Activated CD8-positive, alpha-beta T cell treated with anti-CD3 and anti-CD28 coated beads, Interleukin-2, amount 10 ng/mL, durations not matched to agents 7 days and 5 days (primary cell): ENCODE measurements at regions of chr1 and their contacts with region 1.

Region 1: GRCh38 chr1:12124693-12125421 is 41.9 kb upstream of the TNFRSF1B start:
- DNase-seq: peak; percentile 86
- ATAC-seq: peak; percentile 50
- H3K4me3 Mint-ChIP-seq: no peak overlapping the region
- H3K27ac Mint-ChIP-seq: peak overlapping the region; percentile 35
- H3K4me1 Mint-ChIP-seq: peaks cover 45% of the 10 kb centered on the region
- H3K27me3 Mint-ChIP-seq: peaks cover 15% of the 10 kb centered on the region

Region 2: GRCh38 chr1:11576109-11576875 is 548.6 kb before region 1 on chr1:
- CTCF ChIA-PET with region 1: no interaction called
- POLR2A ChIA-PET with region 1: no interaction called
- DNase-seq: no peak
- ATAC-seq: no peak
- H3K4me3 Mint-ChIP-seq: no peak overlapping the region
- H3K27ac Mint-ChIP-seq: no peak overlapping the region
- H3K4me1 Mint-ChIP-seq: no peaks in the 10 kb centered on the region
- H3K27me3 Mint-ChIP-seq: peaks cover 5% of the 10 kb centered on the region

Region 3: DNA sequence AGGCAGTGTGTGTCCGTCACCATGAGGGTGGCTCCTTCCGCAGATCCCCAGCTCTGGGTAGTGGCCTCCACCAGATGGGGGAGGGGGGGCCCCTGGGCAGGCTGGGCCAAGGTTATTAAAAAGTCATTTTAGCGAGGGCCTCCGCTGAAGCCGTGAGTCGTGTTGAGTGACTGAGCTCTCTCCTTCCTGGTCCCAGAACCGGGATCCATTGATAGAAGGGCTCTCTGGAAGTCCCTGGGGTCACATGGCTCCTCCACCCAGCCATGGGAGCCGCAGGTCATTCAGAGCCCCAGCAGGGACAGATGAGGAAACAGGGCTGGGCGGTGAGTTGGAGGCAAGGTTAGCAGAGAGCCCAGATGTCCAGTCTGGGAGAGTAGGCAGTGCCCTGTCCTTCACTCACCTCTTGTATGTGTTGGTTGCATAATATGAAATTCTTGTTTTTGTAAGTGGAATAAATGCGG is 92.7 kb before region 1 on chr1:
- CTCF ChIA-PET with region 1: no interaction called
- POLR2A ChIA-PET with region 1: no interaction called
- DNase-seq: no peak
- ATAC-seq: no peak
- H3K4me3 Mint-ChIP-seq: no peak overlapping the region
- H3K27ac Mint-ChIP-seq: no peak overlapping the region
- H3K4me1 Mint-ChIP-seq: no peaks in the 10 kb centered on the region
- H3K27me3 Mint-ChIP-seq: no peaks in the 10 kb centered on the region

Region 4: DNA sequence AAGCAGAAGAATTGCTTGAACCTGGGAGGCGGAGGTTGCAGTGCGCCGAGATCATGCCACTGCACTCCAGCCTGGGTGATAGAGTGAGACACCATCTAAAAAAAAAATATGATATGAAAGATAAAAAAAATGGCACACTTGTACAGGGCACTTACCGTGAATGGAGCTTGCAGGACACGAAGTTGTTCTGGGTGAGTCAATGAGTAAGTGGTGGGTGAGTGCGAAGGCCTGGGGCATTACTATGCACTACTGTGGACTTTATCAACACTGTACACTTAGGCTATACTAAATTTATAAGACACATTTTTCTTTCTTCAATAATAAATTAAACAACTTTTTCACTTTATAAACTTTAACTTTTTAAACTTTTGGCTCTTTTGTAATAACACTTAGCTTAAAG is 24.8 kb before region 1 on chr1:
- CTCF ChIA-PET with region 1: interaction called, 19 read pairs
- POLR2A ChIA-PET with region 1: no interaction called
- DNase-seq: no peak
- ATAC-seq: no peak
- H3K4me3 Mint-ChIP-seq: no peak overlapping the region
- H3K27ac Mint-ChIP-seq: no peak overlapping the region
- H3K4me1 Mint-ChIP-seq: peaks cover 8% of the 10 kb centered on the region
- H3K27me3 Mint-ChIP-seq: no peaks in the 10 kb centered on the region

Region 5: GRCh38 chr1:12161662-12162458 is 37.0 kb after region 1 on chr1:
- CTCF ChIA-PET with region 1: interaction called, 40 read pairs
- POLR2A ChIA-PET with region 1: interaction called, 7 read pairs
- DNase-seq: peak; percentile 91
- ATAC-seq: peak; percentile 90
- H3K4me3 Mint-ChIP-seq: peak overlapping the region; percentile 58
- H3K27ac Mint-ChIP-seq: peak overlapping the region; percentile 97
- H3K4me1 Mint-ChIP-seq: peaks cover 90% of the 10 kb centered on the region
- H3K27me3 Mint-ChIP-seq: no peaks in the 10 kb centered on the region

Region 6: DNA sequence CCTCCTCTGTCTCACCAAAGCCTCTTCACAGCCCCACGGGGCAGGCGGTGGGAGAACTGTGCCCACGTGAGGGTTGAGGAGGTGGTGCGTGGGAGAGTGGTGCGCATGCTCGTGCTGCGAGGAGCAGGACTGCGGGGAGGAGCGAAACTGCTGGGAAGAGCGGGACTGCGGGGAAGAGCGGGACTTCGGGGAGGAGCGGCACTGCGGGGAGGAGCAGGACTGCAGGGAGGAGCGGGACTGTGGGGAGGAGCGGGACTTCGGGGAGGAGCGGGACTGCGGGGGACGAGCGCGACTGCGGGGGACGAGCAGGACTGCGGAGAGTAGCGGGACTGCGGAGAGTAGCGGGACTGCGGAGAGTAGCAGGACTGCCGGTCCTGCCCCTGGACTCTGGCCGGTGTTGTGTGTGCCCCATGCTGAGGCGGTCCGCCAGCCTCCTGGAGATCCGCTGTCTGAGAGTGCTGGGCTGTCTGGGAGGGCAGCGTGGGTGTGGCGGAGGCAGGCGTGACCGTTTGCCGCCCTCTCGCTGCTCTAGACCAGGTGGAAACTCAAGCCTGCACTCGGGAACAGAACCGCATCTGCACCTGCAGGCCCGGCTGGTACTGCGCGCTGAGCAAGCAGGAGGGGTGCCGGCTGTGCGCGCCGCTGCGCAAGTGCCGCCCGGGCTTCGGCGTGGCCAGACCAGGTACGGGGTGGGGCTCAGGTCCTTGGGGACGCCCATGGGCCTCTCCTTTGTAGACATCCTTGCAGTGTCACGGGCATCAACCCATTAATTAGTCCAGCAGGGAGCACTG is 66.6 kb after region 1 on chr1:
- CTCF ChIA-PET with region 1: interaction called, 54 read pairs
- POLR2A ChIA-PET with region 1: no interaction called
- DNase-seq: no peak
- ATAC-seq: no peak
- H3K4me3 Mint-ChIP-seq: no peak overlapping the region
- H3K27ac Mint-ChIP-seq: no peak overlapping the region
- H3K4me1 Mint-ChIP-seq: peaks cover 74% of the 10 kb centered on the region
- H3K27me3 Mint-ChIP-seq: no peaks in the 10 kb centered on the region

Region 7: GRCh38 chr1:12220890-12221289 is 96.0 kb after region 1 on chr1:
- CTCF ChIA-PET with region 1: interaction called, 55 read pairs
- POLR2A ChIA-PET with region 1: no interaction called
- DNase-seq: no peak
- ATAC-seq: no peak
- H3K4me3 Mint-ChIP-seq: no peak overlapping the region
- H3K27ac Mint-ChIP-seq: no peak overlapping the region
- H3K4me1 Mint-ChIP-seq: no peaks in the 10 kb centered on the region
- H3K27me3 Mint-ChIP-seq: peaks cover 7% of the 10 kb centered on the region

Region 8: DNA sequence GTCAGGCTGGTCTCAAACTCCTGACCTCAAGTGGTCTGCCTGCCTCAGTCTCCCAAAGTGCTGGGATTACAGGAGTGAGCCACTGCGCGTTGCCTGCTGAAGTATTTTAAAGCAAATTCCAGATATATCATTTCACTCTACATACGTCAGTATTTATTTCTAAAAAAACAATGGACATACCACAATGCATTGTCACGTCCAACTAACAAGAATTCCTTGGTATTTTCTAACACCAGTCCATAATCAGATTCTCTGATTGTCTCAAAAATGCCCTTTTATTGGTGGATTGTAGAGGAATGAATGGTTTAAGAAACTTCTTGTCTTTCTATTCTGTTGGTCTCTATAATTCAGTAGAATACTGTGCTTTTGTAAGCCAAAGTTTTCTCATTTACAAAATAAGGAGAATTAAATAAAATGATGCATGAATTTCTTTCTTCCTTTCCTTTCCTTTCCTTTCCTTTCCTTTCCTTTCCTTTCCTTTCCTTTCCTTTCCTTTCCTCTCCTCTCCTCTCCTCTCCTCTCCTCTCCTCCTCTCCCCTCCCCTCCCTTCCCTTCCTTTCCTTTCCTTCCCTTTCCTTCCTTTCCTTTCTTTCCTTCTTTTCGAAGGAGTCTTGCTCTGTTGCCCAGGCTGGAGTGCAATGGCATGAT is 160.8 kb after region 1 on chr1:
- CTCF ChIA-PET with region 1: interaction called, 10 read pairs
- POLR2A ChIA-PET with region 1: no interaction called
- DNase-seq: no peak
- ATAC-seq: no peak
- H3K4me3 Mint-ChIP-seq: no peak overlapping the region
- H3K27ac Mint-ChIP-seq: no peak overlapping the region
- H3K4me1 Mint-ChIP-seq: peaks cover 10% of the 10 kb centered on the region
- H3K27me3 Mint-ChIP-seq: no peaks in the 10 kb centered on the region